Activated CD8-positive, alpha-beta T cell treated with anti-CD3 and anti-CD28 coated beads for 36 hours (primary cell): ENCODE measurements at regions of chr11 and their contacts with region 1.

Region 1: GRCh38 chr11:17598700-17599459 is 51.8 kb downstream of the OTOG start:
- DNase-seq: peak; percentile 86
- ATAC-seq: peak; percentile 97
- H3K4me3 Mint-ChIP-seq: no peak overlapping the region
- H3K27ac Mint-ChIP-seq: no peak overlapping the region
- H3K4me1 Mint-ChIP-seq: peaks cover 8% of the 10 kb centered on the region
- H3K27me3 Mint-ChIP-seq: peaks cover 3% of the 10 kb centered on the region
- CTCF ChIP-seq: peak; percentile 87

Region 2: DNA sequence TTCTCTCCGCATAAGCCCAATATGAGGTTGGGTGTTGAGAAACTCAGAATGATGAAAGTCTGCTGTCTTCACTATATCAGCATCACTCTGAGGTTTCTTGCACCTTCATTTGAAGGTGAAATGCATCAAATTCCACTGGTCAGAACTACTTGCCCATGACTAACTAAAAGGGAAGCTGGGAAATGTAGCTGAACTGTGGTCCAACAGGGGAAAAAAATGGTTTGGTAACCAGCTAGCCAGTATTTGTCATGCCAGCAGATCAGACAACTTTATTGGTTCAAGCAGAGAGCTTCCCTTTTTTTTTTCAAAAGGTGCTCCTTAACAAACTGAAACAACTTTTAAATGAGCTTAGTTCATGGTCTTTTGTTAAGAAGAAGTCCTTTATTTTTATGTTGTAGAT is 376.9 kb before region 1 on chr11:
- CTCF ChIA-PET with region 1: no interaction called
- POLR2A ChIA-PET with region 1: no interaction called
- intact Hi-C with region 1: no loop called
- DNase-seq: no peak
- ATAC-seq: no peak
- H3K4me3 Mint-ChIP-seq: no peak overlapping the region
- H3K27ac Mint-ChIP-seq: no peak overlapping the region
- H3K4me1 Mint-ChIP-seq: no peaks in the 10 kb centered on the region
- H3K27me3 Mint-ChIP-seq: no peaks in the 10 kb centered on the region
- CTCF ChIP-seq: no peak

Region 3: GRCh38 chr11:17722000-17722643 is 123.2 kb after region 1 on chr11:
- CTCF ChIA-PET with region 1: no interaction called
- POLR2A ChIA-PET with region 1: no interaction called
- intact Hi-C with region 1: loop called (anchors 10 kb)
- DNase-seq: no peak
- ATAC-seq: no peak
- H3K4me3 Mint-ChIP-seq: no peak overlapping the region
- H3K27ac Mint-ChIP-seq: no peak overlapping the region
- H3K4me1 Mint-ChIP-seq: peaks cover 2% of the 10 kb centered on the region
- H3K27me3 Mint-ChIP-seq: peaks cover 36% of the 10 kb centered on the region
- CTCF ChIP-seq: no peak

Region 4: GRCh38 chr11:17978553-17979287 is 379.8 kb after region 1 on chr11:
- CTCF ChIA-PET with region 1: interaction called, 11 read pairs
- POLR2A ChIA-PET with region 1: no interaction called
- intact Hi-C with region 1: loop called (anchors 2 kb)
- DNase-seq: peak; percentile 41
- ATAC-seq: no peak
- H3K4me3 Mint-ChIP-seq: no peak overlapping the region
- H3K27ac Mint-ChIP-seq: no peak overlapping the region
- H3K4me1 Mint-ChIP-seq: no peaks in the 10 kb centered on the region
- H3K27me3 Mint-ChIP-seq: no peaks in the 10 kb centered on the region
- CTCF ChIP-seq: peak; percentile 32